AG04449 (cell line): ENCODE measurements at regions of chr12 and their contacts with region 1.

Region 1: DNA sequence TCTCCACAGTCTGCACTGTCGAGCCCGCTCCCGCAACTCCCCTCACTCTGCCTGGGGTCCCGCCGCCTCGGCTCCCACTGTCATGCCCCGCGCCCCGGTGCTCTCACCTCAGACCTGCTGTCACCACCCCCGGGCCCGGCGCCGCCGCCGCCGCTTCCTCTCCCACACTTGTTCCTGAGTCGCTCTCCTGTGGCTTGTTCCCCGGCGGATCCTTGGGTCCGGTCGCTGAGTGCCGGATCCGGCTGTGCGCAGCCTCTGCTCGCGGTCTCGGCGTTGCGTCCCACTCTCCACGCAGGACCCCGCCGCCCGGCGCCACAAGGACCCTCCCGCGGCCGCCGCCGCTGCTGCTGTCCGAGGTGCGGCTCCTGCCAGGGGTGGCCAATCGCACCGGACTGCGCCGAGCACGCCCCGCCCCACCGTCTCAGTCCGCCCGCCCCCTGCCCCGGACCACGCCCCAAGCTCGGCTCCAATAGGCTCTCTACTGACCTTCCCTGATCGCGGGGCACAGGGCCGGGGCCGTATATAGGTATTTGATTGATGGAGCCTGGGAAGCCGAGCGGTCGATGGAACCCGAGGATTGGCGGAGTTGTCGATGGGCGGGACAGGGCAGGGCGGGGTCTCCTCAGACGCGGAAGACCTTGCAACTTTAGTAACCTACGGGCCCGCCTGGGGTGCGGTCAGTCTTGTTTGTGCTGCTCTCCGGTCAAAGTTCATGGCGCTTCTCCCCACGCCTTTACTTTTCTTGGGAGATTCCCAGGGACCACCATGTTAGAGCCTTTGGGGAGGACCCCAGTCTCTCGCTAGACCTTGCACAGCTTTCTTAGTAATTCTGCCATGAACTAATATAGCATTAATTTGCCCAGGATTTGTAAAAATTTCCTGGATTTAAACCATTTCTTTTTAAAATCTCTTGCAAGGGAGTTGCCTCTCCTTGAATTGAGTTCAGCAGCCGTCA is at the start of gene TAOK3:
- DNase-seq: peak; percentile 95
- H3K4me3 ChIP-seq: peak within 1 kb of the TSS; percentile 89
- CTCF ChIP-seq: no peak

Region 2: GRCh38 chr12:118150625-118151024 is 222.2 kb before region 1 on chr12:
- CTCF ChIA-PET with region 1: interaction called, 18 read pairs
- POLR2A ChIA-PET with region 1: interaction called, 3 read pairs
- DNase-seq: no peak
- H3K4me3 ChIP-seq: no peak overlapping the region
- CTCF ChIP-seq: no peak

Region 3: DNA sequence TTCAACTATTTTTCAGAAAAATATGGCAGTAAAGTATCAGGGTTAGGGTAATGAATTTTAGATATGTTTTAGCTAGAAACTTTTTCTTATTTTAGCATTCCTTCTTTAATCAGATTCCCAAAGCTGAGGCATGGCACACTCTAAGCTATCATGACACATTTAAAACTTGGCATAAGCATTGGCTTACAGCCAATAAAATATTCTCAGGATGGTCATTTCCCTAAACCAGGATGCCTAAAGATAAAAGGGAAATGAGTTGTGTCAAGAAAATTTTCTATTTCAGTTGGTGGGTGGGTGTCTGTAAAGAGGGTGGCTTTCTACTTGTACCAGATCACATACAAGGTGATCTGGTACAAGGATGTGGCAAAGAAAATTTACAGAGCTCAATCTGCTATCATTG is 189.1 kb before region 1 on chr12:
- CTCF ChIA-PET with region 1: interaction called, 589 read pairs
- POLR2A ChIA-PET with region 1: no interaction called
- DNase-seq: no peak
- H3K4me3 ChIP-seq: no peak overlapping the region
- CTCF ChIP-seq: no peak

Region 4: DNA sequence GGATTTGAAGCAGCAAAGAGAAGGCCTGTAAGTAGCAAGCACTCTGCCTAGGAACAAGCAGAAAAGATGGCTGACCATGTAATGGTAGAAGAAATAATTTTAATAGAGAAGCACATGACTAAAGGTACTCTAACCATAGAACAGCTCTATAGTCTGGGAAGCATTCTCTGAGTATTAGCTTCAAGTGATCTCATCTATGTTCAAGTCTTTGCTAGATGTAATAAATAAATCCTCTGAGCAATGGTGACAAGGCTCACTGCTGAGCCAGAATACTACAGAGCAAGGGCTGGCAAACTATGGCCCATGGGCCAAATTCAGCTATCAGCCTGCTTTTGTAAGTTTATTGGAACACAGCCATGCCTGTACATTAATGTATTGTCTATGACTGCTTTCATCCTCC is 152.1 kb before region 1 on chr12:
- CTCF ChIA-PET with region 1: interaction called, 16 read pairs
- POLR2A ChIA-PET with region 1: no interaction called
- DNase-seq: no peak
- H3K4me3 ChIP-seq: no peak overlapping the region
- CTCF ChIP-seq: no peak

Region 5: GRCh38 chr12:118302066-118302465 is 70.8 kb before region 1 on chr12:
- CTCF ChIA-PET with region 1: interaction called, 40 read pairs
- POLR2A ChIA-PET with region 1: interaction called, 7 read pairs
- DNase-seq: no peak
- H3K4me3 ChIP-seq: no peak overlapping the region
- CTCF ChIP-seq: no peak

Region 6: DNA sequence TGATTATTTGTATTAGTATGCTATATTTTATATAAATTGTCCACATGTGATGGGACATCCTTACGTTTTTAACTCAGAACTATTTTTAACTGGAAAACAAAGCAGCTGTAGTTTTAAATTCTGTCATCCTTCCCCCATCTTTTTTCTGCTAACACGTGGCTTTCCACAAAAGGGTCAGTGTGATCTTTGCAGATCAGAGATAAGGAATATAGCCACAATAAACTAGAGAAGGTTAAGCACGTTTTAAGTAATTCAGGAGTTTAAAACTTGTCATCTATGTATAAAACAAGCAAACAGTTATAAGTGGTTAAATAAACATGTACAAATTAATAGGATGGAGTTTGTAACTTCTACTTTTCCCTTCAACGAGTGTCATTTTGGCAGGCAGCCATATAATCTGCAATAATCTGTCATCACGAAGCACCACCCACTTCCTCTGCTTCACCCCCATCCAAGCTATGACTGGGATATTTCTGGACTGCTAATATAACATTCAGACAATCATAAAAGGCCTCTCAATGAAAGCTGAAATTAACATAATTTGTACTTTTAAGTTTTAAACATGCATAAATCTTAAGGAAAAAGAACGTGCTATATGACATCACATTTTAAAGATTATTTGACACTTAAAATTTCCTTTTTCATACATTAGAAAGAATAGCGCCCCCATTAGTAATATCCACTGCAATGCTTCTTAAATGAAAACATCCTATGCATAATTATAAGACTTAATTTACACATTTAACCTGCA is 15.4 kb before region 1 on chr12:
- CTCF ChIA-PET with region 1: interaction called, 36 read pairs
- POLR2A ChIA-PET with region 1: interaction called, 8 read pairs
- DNase-seq: no peak
- H3K4me3 ChIP-seq: no peak overlapping the region
- CTCF ChIP-seq: no peak

Region 7: GRCh38 chr12:118404876-118405521 is 32.2 kb after region 1 on chr12:
- CTCF ChIA-PET with region 1: interaction called, 23 read pairs
- POLR2A ChIA-PET with region 1: no interaction called
- DNase-seq: peak; percentile 23
- H3K4me3 ChIP-seq: no peak overlapping the region
- CTCF ChIP-seq: peak; percentile 58

Region 8: DNA sequence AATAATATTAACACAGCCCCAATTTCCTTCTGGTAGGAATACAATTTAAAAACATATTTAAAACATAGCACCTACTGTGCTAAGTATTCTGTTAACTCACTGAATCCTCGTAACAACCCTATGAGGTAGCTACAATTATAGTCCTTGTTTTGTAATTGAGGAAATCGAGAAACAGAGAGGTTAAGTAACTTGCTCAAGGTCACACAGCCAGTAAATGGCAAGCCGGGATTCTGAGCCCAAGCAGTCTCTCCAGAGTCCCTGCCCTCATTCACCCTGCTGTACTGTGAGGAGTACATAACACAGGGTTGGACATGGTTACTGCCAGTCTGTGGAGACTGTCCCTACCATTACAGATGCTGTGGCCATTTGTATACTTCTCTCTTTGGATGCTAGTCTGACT is 47.9 kb after region 1 on chr12:
- CTCF ChIA-PET with region 1: no interaction called
- POLR2A ChIA-PET with region 1: no interaction called
- DNase-seq: no peak
- H3K4me3 ChIP-seq: no peak overlapping the region
- CTCF ChIP-seq: no peak

Region 9: GRCh38 chr12:118526255-118527095 is 153.7 kb after region 1 on chr12:
- CTCF ChIA-PET with region 1: no interaction called
- POLR2A ChIA-PET with region 1: no interaction called
- DNase-seq: no peak
- H3K4me3 ChIP-seq: no peak overlapping the region
- CTCF ChIP-seq: no peak